Mammary epithelial cell (primary cell): ENCODE measurements at regions of chr10 and their contacts with region 1.

Region 1: GRCh38 chr10:10878963-10879362 is 138.7 kb upstream of the CELF2 start:
- DNase-seq: no peak
- H3K4me3 ChIP-seq: no peak overlapping the region
- H3K27ac ChIP-seq: no peak overlapping the region
- H3K4me1 ChIP-seq: no peaks in the 10 kb centered on the region
- H3K27me3 ChIP-seq: peaks cover 3% of the 10 kb centered on the region
- CTCF ChIP-seq: no peak

Region 2: GRCh38 chr10:10959666-10960065 is 80.7 kb after region 1 on chr10:
- CTCF ChIA-PET with region 1: no interaction called
- dilution Hi-C with region 1: loop called (anchors 5 kb)
- in situ Hi-C with region 1: no loop called
- intact Hi-C with region 1: no loop called
- DNase-seq: no peak
- H3K4me3 ChIP-seq: no peak overlapping the region
- H3K27ac ChIP-seq: no peak overlapping the region
- H3K4me1 ChIP-seq: no peaks in the 10 kb centered on the region
- H3K27me3 ChIP-seq: no peaks in the 10 kb centered on the region
- CTCF ChIP-seq: no peak